ENCODE measurements at regions of chr10 and their contacts with region 1.

Region 1: GRCh38 chr10:93482145-93482834 is at the start of gene MYOF:
- DNase-seq: peak; percentile 78
- H3K4me3 ChIP-seq: peak within 1 kb of the TSS; percentile 90
- H3K27ac ChIP-seq: peak within 1 kb of the TSS; percentile 97
- H3K27me3 ChIP-seq: no peaks in the 10 kb centered on the region
- CTCF ChIP-seq: peak; percentile 62
- polyA plus RNA-seq, gene MYOF: 254 and 275 TPM in 2 replicates

Region 2: GRCh38 chr10:93368210-93368609 is 114.1 kb before region 1 on chr10:
- CTCF ChIA-PET with region 1: interaction called, 35 read pairs
- POLR2A ChIA-PET with region 1: no interaction called
- DNase-seq: no peak
- H3K4me3 ChIP-seq: no peak overlapping the region
- H3K27ac ChIP-seq: no peak overlapping the region
- H3K27me3 ChIP-seq: no peaks in the 10 kb centered on the region
- CTCF ChIP-seq: no peak

Region 3: GRCh38 chr10:93403152-93404041 is 78.9 kb before region 1 on chr10:
- CTCF ChIA-PET with region 1: interaction called, 24 read pairs
- POLR2A ChIA-PET with region 1: interaction called, 4 read pairs
- DNase-seq: no peak
- H3K4me3 ChIP-seq: no peak overlapping the region
- H3K27ac ChIP-seq: no peak overlapping the region
- H3K27me3 ChIP-seq: no peaks in the 10 kb centered on the region
- CTCF ChIP-seq: no peak

Region 4: GRCh38 chr10:93437088-93437945 is 45.0 kb before region 1 on chr10:
- CTCF ChIA-PET with region 1: interaction called, 28 read pairs
- POLR2A ChIA-PET with region 1: interaction called, 24 read pairs
- DNase-seq: peak; percentile 98
- H3K4me3 ChIP-seq: peak overlapping the region; percentile 45
- H3K27ac ChIP-seq: peak overlapping the region; percentile 100
- H3K27me3 ChIP-seq: no peaks in the 10 kb centered on the region
- CTCF ChIP-seq: no peak

Region 5: GRCh38 chr10:93463678-93464476 is 18.4 kb before region 1 on chr10:
- CTCF ChIA-PET with region 1: interaction called, 20 read pairs
- POLR2A ChIA-PET with region 1: interaction called, 15 read pairs
- DNase-seq: no peak
- H3K4me3 ChIP-seq: no peak overlapping the region
- H3K27ac ChIP-seq: peak overlapping the region; percentile 97
- H3K27me3 ChIP-seq: no peaks in the 10 kb centered on the region
- CTCF ChIP-seq: no peak

Region 6: GRCh38 chr10:93496322-93497041 is 14.2 kb after region 1 on chr10 and contains the start of gene CEP55:
- CTCF ChIA-PET with region 1: interaction called, 18 read pairs
- POLR2A ChIA-PET with region 1: interaction called, 3 read pairs
- DNase-seq: no peak
- H3K4me3 ChIP-seq: peak within 1 kb of the TSS; percentile 82
- H3K27ac ChIP-seq: peak within 1 kb of the TSS; percentile 39
- H3K27me3 ChIP-seq: no peaks in the 10 kb centered on the region
- CTCF ChIP-seq: no peak
- polyA plus RNA-seq, gene CEP55: 10.0 and 16.3 TPM in 2 replicates

Region 7: DNA sequence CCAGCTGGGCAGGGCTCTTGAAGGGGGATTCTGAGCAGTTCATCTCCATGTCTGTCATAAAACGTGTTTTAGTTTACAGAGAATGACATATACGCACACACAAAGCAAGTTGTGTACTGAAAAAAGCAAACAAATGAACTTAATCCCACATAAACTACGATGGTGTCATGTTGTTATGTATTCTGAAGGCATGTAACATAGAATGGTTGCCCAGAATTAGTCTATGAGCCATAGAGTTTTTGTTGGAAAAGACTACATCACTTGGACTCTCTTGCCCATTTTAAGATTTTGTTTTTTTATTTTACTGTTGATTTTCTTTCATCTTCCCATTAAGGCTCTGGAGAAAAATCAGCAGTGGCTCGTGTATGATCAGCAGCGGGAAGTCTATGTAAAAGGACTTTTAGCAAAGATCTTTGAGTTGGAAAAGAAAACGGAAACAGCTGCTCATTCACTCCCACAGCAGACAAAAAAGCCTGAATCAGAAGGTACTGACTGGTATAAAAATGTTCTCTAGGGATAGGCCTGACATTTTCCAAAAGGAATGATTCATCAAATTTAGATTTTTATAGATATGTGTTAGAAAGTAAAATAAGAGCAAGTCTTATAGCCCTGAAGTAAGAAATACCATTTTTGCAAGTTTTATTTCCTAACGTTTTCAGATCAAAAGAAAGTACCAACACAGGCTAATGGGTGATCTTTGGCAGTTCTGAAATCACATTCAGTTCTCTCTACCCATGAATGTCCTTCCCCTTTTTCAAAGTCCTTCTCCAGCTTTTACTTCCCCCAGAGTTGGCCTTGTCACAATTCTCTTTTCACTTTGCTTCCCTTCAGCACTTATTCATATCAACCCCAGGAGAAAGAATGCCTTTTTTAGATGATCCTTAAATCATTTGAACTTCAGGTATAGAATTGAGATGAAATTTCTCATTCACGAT is 33.0 kb after region 1 on chr10:
- CTCF ChIA-PET with region 1: interaction called, 36 read pairs
- POLR2A ChIA-PET with region 1: no interaction called
- DNase-seq: no peak
- H3K4me3 ChIP-seq: no peak overlapping the region
- H3K27ac ChIP-seq: no peak overlapping the region
- H3K27me3 ChIP-seq: no peaks in the 10 kb centered on the region
- CTCF ChIP-seq: no peak

Measured in AG04450 (cell line).